MCF 10A (cell line): ENCODE measurements at regions of chr11 and their contacts with region 1.

Region 1: GRCh38 chr11:83819933-83820549 is 533.9 kb upstream of the CCDC90B start:
- DNase-seq: peak; percentile 68
- H3K4me3 Mint-ChIP-seq: no peak overlapping the region
- H3K27ac Mint-ChIP-seq: no peak overlapping the region
- H3K4me1 Mint-ChIP-seq: no peaks in the 10 kb centered on the region
- H3K27me3 Mint-ChIP-seq: peaks cover 27% of the 10 kb centered on the region
- CTCF ChIP-seq: peak; percentile 58

Region 2: DNA sequence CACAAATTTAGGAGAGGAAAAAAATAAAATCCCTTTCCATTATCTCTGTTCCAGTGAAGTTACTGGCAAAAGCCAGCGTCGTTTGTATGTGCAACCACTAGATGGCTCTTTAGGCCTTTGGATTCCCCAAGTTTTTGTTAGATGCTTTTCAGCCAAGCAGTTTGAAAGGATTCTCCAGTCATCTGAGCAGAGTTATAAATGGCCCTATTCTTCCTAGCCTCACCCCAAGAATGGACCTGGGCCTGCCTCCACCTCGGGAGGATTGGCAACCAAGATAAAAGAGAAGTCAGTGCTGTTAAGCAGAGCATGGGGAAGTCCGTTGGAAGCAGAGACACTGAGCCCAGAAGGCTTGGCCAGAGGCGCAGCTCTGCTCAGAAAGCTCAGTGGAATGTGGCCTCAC is 1101.7 kb before region 1 on chr11:
- CTCF ChIA-PET with region 1: interaction called, 22 read pairs
- POLR2A ChIA-PET with region 1: no interaction called
- intact Hi-C with region 1: loop called (anchors 1 kb)
- DNase-seq: peak; percentile 58
- H3K4me3 Mint-ChIP-seq: no peak overlapping the region
- H3K27ac Mint-ChIP-seq: no peak overlapping the region
- H3K4me1 Mint-ChIP-seq: no peaks in the 10 kb centered on the region
- H3K27me3 Mint-ChIP-seq: no peaks in the 10 kb centered on the region
- CTCF ChIP-seq: peak; percentile 60

Region 3: GRCh38 chr11:83241291-83241946 is 578.6 kb before region 1 on chr11:
- CTCF ChIA-PET with region 1: interaction called, 5 read pairs
- POLR2A ChIA-PET with region 1: no interaction called
- intact Hi-C with region 1: loop called (anchors 1 kb)
- DNase-seq: peak; percentile 80
- H3K4me3 Mint-ChIP-seq: no peak overlapping the region
- H3K27ac Mint-ChIP-seq: no peak overlapping the region
- H3K4me1 Mint-ChIP-seq: no peaks in the 10 kb centered on the region
- H3K27me3 Mint-ChIP-seq: no peaks in the 10 kb centered on the region
- CTCF ChIP-seq: peak; percentile 47

Region 4: GRCh38 chr11:83521647-83522596 is 298.1 kb before region 1 on chr11:
- CTCF ChIA-PET with region 1: interaction called, 7 read pairs
- POLR2A ChIA-PET with region 1: no interaction called
- intact Hi-C with region 1: loop called (anchors 1 kb)
- DNase-seq: peak; percentile 27
- H3K4me3 Mint-ChIP-seq: no peak overlapping the region
- H3K27ac Mint-ChIP-seq: no peak overlapping the region
- H3K4me1 Mint-ChIP-seq: no peaks in the 10 kb centered on the region
- H3K27me3 Mint-ChIP-seq: peaks cover 10% of the 10 kb centered on the region
- CTCF ChIP-seq: no peak

Region 5: DNA sequence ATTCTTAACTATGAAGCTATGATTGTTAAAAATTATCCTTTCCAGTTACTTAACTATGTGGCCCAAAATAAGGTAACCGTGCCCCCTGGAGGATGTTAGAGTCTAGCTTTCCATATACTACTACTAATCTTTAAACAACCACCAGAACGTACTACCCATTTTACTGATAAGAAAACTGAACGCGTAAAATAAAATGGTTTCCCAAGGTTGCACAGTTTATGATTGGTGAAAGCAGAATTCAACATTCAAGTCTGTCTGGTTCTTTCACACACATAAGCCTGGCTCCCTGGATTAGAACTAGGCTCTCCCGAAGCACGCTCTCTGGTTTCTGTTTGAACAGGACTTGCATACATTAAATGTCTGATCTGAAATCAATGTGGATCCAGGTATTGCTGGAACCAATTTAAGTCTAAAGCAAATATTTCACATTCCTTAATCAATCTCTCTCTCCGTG is 96.0 kb before region 1 on chr11:
- CTCF ChIA-PET with region 1: interaction called, 10 read pairs
- POLR2A ChIA-PET with region 1: no interaction called
- intact Hi-C with region 1: loop called (anchors 5 kb)
- DNase-seq: peak; percentile 54
- H3K4me3 Mint-ChIP-seq: peak overlapping the region; percentile 51
- H3K27ac Mint-ChIP-seq: no peak overlapping the region
- H3K4me1 Mint-ChIP-seq: peaks cover 5% of the 10 kb centered on the region
- H3K27me3 Mint-ChIP-seq: peaks cover 53% of the 10 kb centered on the region
- CTCF ChIP-seq: peak; percentile 38

Region 6: DNA sequence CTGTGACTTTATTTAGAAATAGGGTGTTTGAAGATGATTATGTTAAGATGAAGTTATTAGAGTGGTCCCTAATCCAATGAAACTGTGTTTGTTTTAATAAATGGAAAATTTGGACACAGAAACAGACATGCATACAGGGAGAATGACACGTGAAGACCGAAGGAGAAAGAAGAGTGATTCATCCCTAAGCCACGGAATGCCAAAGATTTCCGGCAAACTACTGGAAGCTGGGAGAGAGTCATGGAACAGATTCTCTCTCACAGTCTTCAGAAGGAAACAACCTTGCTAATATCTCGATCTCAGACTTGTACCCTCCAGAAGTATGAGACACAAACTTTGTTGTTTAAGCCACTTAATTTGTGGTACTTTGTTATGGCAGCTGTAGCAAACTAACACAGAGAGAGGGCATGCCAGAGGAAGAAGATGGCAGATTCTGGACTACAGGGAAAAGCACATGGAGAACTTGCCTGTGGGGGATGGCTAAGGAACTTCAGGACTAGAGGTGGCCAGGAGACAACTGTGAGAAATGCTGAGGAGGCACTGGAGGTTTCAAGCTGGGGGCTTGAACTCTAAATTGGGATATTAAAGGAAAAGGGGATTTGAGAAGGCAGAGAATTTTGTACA is 199.6 kb after region 1 on chr11:
- CTCF ChIA-PET with region 1: no interaction called
- POLR2A ChIA-PET with region 1: no interaction called
- intact Hi-C with region 1: no loop called
- DNase-seq: peak; percentile 26
- H3K4me3 Mint-ChIP-seq: no peak overlapping the region
- H3K27ac Mint-ChIP-seq: no peak overlapping the region
- H3K4me1 Mint-ChIP-seq: peaks cover 9% of the 10 kb centered on the region
- H3K27me3 Mint-ChIP-seq: no peaks in the 10 kb centered on the region
- CTCF ChIP-seq: no peak